BJ (cell line): ENCODE measurements at regions of chr1 and their contacts with region 1.

Region 1: DNA sequence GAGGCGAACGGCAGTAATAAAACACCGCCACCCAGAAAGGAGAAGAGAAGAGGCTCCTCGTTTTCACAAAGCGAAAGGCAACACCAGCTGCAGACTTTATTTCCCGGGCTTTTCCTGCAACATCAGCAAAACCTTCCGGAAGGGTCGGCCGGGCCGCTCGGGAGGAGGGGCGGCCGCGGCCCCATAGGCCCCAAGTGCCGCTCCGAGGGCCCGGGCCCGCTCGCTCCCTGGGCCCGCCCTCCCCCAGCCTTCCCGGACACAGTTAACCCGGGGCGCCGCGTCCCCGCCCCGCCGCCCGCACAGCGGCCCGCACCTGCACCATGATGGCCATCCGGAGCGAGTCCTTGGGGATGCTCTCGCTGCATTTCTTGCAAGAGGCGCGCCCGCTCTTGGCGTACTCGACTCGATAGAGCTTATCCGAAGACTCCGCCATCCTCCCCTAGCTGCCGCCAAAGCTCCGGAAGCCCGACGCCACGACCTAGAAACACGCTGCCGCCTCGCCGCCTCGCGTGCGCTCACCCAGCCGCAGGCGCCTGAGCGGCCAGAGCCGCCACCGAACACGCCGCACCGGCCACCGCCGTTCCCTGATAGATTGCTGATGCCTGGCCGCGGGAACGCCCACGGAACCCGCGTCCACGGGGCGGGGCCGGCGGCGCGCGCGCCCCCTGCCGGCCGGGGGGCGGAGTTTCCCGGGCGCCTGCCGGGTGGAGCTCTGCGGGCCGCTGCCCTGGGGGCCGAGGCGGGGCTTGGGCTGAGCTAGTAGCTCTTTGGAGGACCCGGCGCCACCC is at the start of gene PARP1:
- DNase-seq: no peak
- H3K4me3 ChIP-seq: peak within 1 kb of the TSS; percentile 70
- H3K27me3 ChIP-seq: no peaks in the 10 kb centered on the region; the same call in 1 of the 2 replicates
- CTCF ChIP-seq: peak; percentile 28
- polyA plus RNA-seq, gene PARP1: 58.3 and 58.7 TPM in 2 replicates

Region 2: GRCh38 chr1:226397011-226397926 is 10.4 kb before region 1 on chr1:
- CTCF ChIA-PET with region 1: interaction called, 18 read pairs
- POLR2A ChIA-PET with region 1: interaction called, 12 read pairs
- DNase-seq: no peak
- H3K4me3 ChIP-seq: no peak overlapping the region
- H3K27me3 ChIP-seq: no peaks in the 10 kb centered on the region
- CTCF ChIP-seq: no peak

Region 3: DNA sequence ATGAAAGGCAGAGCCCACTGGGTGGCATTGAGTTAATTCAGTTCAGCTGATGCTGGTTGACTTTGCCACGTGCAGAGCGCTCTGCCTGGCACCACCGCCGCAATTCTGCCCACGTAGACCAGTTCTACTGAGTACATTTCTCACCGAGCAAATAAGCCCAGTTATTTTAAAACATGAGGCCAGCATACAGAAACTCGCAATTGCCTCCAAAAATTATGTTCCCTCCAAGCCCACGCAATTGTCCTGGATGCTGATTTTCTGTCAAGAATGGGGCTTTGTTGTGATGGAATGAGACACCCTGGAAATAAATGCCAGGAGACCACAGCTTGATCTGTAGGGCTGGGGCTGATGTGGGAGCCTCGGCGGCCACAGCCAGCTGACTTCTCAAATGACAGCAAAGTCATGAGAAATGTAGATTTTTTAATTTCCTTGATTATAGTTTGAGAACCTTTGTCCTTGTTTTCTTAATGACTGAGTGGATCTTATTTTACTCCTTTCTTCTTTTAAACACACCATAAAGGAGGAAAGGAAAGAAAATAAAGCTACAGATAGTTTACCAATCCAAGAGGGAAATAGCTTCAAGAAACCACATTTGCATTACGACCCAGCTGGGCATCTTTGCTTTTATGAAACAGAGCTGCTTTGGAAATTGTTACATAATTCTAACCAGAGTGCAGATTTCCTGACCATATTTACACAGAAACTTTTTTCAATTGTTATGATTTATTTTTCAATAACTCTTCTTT is 11.8 kb after region 1 on chr1:
- CTCF ChIA-PET with region 1: interaction called, 16 read pairs
- POLR2A ChIA-PET with region 1: no interaction called
- DNase-seq: no peak
- H3K4me3 ChIP-seq: no peak overlapping the region
- H3K27me3 ChIP-seq: no peaks in the 10 kb centered on the region; the same call in 1 of the 2 replicates
- CTCF ChIP-seq: no peak

Region 4: DNA sequence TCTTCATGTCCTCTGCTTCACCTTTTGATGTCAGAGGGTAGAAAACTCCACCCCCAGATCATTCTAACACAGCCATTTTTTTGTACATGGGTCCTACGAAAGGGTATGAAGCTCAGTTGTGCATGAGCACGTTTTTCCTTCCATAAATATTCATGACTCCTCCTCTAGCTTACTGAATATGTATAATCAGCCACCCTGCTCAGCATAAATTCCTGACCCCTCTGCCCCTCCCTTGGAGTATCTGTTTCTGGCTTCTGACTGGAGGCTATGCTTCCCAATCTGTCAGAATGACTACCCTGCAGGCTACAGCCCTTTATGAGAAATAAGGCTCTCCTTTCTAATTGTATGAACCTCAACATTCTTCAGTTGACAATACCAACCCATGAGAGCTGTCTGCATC is 43.0 kb after region 1 on chr1:
- CTCF ChIA-PET with region 1: no interaction called
- POLR2A ChIA-PET with region 1: no interaction called
- DNase-seq: no peak
- H3K4me3 ChIP-seq: no peak overlapping the region
- H3K27me3 ChIP-seq: no peaks in the 10 kb centered on the region
- CTCF ChIP-seq: no peak